ENCODE measurements at regions of chr1 and their contacts with region 1.

Region 1: DNA sequence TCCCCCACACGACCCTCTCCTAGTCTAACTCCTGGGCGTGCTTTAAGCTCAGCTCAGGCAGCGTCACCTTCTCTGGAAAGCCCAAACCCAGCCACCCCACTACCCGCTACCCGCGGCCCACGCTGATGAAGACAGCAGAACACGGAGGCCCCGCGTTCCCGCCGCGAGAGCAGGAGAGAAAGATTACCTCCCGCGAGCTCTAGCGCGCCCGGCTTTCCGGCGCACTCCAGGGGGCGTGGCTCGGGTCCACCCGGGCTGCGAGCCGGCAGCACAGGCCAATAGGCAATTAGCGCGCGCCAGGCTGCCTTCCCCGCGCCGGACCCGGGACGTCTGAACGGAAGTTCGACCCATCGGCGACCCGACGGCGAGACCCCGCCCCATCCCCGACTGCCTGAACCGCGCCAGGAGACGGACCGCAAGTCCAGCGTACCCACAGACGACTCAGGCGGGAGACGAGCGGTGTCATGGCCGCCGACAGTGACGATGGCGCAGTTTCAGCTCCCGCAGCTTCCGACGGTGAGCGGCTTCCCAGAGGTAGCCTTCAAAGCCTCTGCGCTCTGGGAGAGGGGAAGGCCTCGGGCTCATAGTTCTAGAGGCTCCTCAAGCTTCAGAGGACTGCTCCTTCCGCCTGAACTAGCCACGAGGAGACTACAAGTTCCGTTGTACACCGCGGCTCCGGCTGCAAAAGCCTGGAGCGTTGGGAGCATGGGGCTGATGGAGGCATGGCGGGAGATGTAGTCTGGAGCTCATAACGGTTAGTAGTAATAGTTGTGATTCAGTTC is at the starts of genes MUTYH and TOE1:
- DNase-seq: peak; percentile 97
- H3K4me3 Mint-ChIP-seq: peak within 1 kb of the TSS; percentile 93
- H3K27ac Mint-ChIP-seq: peak within 1 kb of the TSS; percentile 98
- H3K4me1 Mint-ChIP-seq: peaks cover 34% of the 10 kb centered on the region
- H3K27me3 Mint-ChIP-seq: no peaks in the 10 kb centered on the region
- total RNA-seq, gene MUTYH: 49.2 to 51.8 TPM
- total RNA-seq, gene TOE1: 22.8 to 23.1 TPM

Region 2: DNA sequence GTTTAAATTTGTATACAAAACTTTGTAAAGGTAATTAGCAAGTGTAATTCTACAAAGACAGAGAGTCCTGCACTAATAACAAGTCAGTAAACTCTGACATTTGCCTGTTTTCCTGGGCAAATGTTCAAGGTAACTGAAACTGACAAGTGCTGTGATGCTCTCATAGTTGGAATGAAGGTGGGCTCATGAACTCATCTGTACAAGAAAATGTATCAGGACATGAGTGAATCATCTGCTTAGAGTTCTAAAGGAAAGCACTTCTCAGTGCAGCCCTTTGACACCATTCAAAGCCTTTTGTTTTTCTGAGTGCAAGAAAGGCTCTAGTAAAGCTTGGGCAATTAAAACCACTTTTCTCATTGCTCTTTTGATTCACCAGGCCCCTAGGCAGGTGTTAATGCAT is 236.4 kb before region 1 on chr1:
- CTCF ChIA-PET with region 1: no interaction called
- POLR2A ChIA-PET with region 1: no interaction called
- intact Hi-C with region 1: no loop called
- DNase-seq: no peak
- H3K4me3 Mint-ChIP-seq: no peak overlapping the region
- H3K27ac Mint-ChIP-seq: no peak overlapping the region
- H3K4me1 Mint-ChIP-seq: no peaks in the 10 kb centered on the region
- H3K27me3 Mint-ChIP-seq: no peaks in the 10 kb centered on the region

Region 3: GRCh38 chr1:45266151-45266801 is 73.7 kb before region 1 on chr1:
- CTCF ChIA-PET with region 1: no interaction called
- POLR2A ChIA-PET with region 1: no interaction called
- intact Hi-C with region 1: no loop called
- DNase-seq: no peak
- H3K4me3 Mint-ChIP-seq: no peak overlapping the region
- H3K27ac Mint-ChIP-seq: no peak overlapping the region
- H3K4me1 Mint-ChIP-seq: no peaks in the 10 kb centered on the region
- H3K27me3 Mint-ChIP-seq: no peaks in the 10 kb centered on the region

Region 4: GRCh38 chr1:45326627-45327623 is 13.1 kb before region 1 on chr1 and contains the start of gene HPDL:
- CTCF ChIA-PET with region 1: interaction called, 16 read pairs
- POLR2A ChIA-PET with region 1: interaction called, 70 read pairs
- intact Hi-C with region 1: loop called (anchors 1 kb)
- DNase-seq: peak; percentile 77
- H3K4me3 Mint-ChIP-seq: peak within 1 kb of the TSS; percentile 76
- H3K27ac Mint-ChIP-seq: peak within 1 kb of the TSS; percentile 45
- H3K4me1 Mint-ChIP-seq: peaks cover 16% of the 10 kb centered on the region
- H3K27me3 Mint-ChIP-seq: no peaks in the 10 kb centered on the region
- total RNA-seq, gene HPDL: 12.7 to 14.3 TPM